ENCODE measurements at regions of chr12 and their contacts with region 1.

Region 1: DNA sequence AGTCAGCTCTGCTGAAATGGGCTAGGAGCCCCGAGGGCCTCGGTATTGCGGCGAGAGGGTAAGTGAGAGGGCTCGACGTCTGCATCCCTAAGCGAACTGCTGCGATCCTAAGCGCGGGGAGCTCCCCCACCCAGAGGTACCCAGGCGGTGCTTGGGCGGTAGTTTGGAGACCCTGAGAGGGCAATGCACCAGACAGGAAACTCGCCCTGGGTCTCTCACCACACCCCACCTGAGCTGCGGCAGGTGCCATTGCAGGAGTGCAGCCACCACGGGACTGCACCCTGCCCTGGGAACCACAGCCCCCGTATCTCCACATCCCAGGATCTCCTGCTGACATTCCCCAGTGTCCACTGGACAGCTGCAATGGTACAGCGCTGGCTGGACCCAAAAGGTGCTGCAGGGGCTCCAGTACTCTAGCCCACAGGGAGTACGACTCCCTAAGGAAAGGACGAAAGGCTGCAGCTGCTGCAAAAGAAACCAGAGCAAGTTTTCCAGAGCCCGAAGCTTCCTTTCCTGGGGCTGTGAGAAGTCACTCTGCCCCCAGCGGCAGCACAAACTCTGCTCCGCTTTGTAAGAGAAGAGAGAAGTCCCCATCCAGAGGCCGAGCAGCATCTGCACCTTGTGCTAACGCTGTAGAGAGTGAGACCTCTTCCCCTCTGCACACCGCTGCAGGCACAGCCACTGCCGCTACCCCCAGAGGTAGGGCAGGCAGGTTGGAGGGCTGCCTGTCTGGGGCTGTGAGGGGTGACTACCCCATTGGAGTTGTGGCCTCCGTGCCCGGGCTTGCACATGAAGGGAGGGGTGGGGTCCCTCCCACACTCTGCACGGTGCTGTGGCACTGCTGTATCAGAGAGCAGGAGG is 31.1 kb upstream of the MON2 start:
- DNase-seq: peak; percentile 63
- ATAC-seq: peak; percentile 91
- H3K4me3 ChIP-seq: peak overlapping the region; percentile 27
- H3K27ac ChIP-seq: no peak overlapping the region
- H3K4me1 ChIP-seq: no peaks in the 10 kb centered on the region
- H3K27me3 ChIP-seq: peaks cover 13% of the 10 kb centered on the region
- CTCF ChIP-seq: peak; percentile 53
- POLR2A ChIP-seq: no peak
- RAD21 ChIP-seq: peak; percentile 19; the same call in 1 of the 2 replicates

Region 2: GRCh38 chr12:62014330-62014729 is 421.2 kb before region 1 on chr12:
- CTCF ChIA-PET with region 1: no interaction called
- POLR2A ChIA-PET with region 1: no interaction called
- dilution Hi-C with region 1: no loop called
- in situ Hi-C with region 1: no loop called
- intact Hi-C with region 1: no loop called
- DNase-seq: no peak
- ATAC-seq: no peak
- H3K4me3 ChIP-seq: no peak overlapping the region
- H3K27ac ChIP-seq: no peak overlapping the region
- H3K4me1 ChIP-seq: no peaks in the 10 kb centered on the region
- H3K27me3 ChIP-seq: no peaks in the 10 kb centered on the region
- CTCF ChIP-seq: no peak
- POLR2A ChIP-seq: no peak
- RAD21 ChIP-seq: no peak

Region 3: GRCh38 chr12:62530596-62530995 is 95.1 kb after region 1 on chr12:
- CTCF ChIA-PET with region 1: no interaction called
- POLR2A ChIA-PET with region 1: no interaction called
- dilution Hi-C with region 1: no loop called
- in situ Hi-C with region 1: no loop called
- intact Hi-C with region 1: loop called (anchors 5 kb)
- DNase-seq: peak; percentile 95
- ATAC-seq: peak; percentile 98
- H3K4me3 ChIP-seq: no peak overlapping the region
- H3K27ac ChIP-seq: no peak overlapping the region; the same call in 1 of the 2 replicates
- H3K4me1 ChIP-seq: peaks cover 7% of the 10 kb centered on the region
- H3K27me3 ChIP-seq: no peaks in the 10 kb centered on the region
- CTCF ChIP-seq: no peak
- POLR2A ChIP-seq: no peak
- RAD21 ChIP-seq: no peak

Region 4: DNA sequence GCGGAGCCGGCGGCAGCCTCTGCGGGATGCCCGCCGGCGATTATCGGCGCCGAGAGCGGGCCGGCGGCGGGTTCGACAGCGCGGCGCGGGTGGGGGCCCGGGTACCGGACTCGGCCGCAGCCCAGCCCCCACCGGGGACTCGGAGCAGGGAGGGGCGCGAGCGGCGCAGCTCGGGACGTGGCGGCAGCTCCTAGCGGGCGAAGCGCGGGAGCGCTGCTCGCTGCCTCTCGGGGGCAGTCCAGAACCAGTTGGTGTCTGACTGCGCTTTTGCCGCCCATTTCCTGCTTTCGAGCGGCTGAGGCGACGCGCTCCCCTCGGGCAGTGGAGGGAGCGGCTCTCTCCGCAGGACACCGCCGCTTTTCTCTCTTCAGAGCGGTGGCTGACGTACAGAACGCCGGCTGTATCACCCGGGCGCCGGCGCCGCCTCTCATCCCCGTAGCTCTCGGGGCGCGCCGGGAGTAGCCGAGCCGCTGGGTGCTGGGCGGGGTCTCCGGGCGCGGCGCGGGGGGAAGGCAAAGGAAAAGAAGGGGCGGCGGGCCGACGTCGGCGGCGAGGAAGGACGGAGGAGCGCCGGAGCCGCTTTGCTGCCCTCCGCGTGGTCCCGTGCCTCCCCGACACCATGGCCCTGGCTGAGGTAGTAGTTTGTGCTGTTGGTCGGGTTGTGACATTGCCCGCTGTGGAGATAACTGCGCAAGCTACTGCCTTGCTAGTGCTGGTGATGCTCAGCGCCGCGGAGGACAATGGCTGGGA is 167.7 kb after region 1 on chr12:
- CTCF ChIA-PET with region 1: interaction called, 3 read pairs
- POLR2A ChIA-PET with region 1: no interaction called
- dilution Hi-C with region 1: no loop called
- in situ Hi-C with region 1: no loop called
- intact Hi-C with region 1: loop called (anchors 5 kb)
- DNase-seq: peak; percentile 89
- ATAC-seq: peak; percentile 90
- H3K4me3 ChIP-seq: peak overlapping the region; percentile 97
- H3K27ac ChIP-seq: peak overlapping the region; percentile 99
- H3K4me1 ChIP-seq: no peaks in the 10 kb centered on the region; the same call in 1 of the 2 replicates
- H3K27me3 ChIP-seq: no peaks in the 10 kb centered on the region
- CTCF ChIP-seq: peak; percentile 60
- POLR2A ChIP-seq: peak; percentile 88
- RAD21 ChIP-seq: peak; percentile 56

Region 5: GRCh38 chr12:62799126-62799736 is 363.7 kb after region 1 on chr12:
- CTCF ChIA-PET with region 1: interaction called, 13 read pairs
- POLR2A ChIA-PET with region 1: no interaction called
- dilution Hi-C with region 1: no loop called
- in situ Hi-C with region 1: loop called (anchors 5 kb)
- intact Hi-C with region 1: loop called (anchors 1 kb)
- DNase-seq: peak; percentile 72
- ATAC-seq: peak; percentile 94
- H3K4me3 ChIP-seq: no peak overlapping the region
- H3K27ac ChIP-seq: no peak overlapping the region
- H3K4me1 ChIP-seq: no peaks in the 10 kb centered on the region
- H3K27me3 ChIP-seq: no peaks in the 10 kb centered on the region
- CTCF ChIP-seq: peak; percentile 93
- POLR2A ChIP-seq: no peak
- RAD21 ChIP-seq: peak; percentile 95

Region 6: DNA sequence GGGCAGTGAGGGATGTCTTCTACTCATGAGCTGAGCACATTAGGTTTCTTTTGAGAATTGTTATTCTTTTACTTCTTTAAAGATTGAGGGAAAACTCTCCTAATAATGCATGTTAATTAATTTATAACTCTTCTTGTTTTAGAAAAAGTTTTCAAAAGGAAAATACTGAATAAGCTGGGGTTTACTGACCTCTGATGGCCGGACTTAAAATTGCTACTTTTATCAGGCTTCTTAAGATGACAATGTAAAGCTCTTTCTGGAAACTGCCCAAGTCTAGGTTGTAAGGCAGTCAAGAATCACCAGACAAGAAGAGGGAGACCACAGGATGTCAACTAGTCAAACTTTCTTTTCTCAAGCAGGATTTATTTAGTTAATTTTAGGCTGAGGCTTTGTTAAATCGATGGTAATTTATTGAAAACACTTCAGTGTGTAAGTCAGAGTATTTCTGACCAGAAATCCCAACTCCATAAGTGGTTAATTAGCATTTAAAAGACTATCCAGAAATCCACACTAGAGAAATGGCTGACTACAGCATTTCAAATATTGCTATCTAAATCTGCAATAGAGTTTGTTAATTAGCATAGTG is 633.4 kb after region 1 on chr12:
- CTCF ChIA-PET with region 1: interaction called, 8 read pairs
- POLR2A ChIA-PET with region 1: no interaction called
- dilution Hi-C with region 1: no loop called
- in situ Hi-C with region 1: loop called (anchors 10 kb)
- intact Hi-C with region 1: loop called (anchors 2 kb)
- DNase-seq: peak; percentile 75
- ATAC-seq: peak; percentile 67
- H3K4me3 ChIP-seq: no peak overlapping the region
- H3K27ac ChIP-seq: no peak overlapping the region
- H3K4me1 ChIP-seq: no peaks in the 10 kb centered on the region
- H3K27me3 ChIP-seq: 0 out of 2 replicates have a peak, but pooled peaks cover 2% of the 10 kb centered on the region
- CTCF ChIP-seq: peak; percentile 70
- POLR2A ChIP-seq: no peak
- RAD21 ChIP-seq: peak; percentile 81

Measured in IMR-90 (cell line).